Mammary epithelial cell (primary cell): ENCODE measurements at regions of chr10 and their contacts with region 1.

Region 1: GRCh38 chr10:84743483-84743882 is 415.1 kb downstream of the CCSER2 start:
- DNase-seq: no peak
- H3K4me3 ChIP-seq: no peak overlapping the region
- H3K27ac ChIP-seq: no peak overlapping the region
- H3K4me1 ChIP-seq: no peaks in the 10 kb centered on the region
- H3K27me3 ChIP-seq: no peaks in the 10 kb centered on the region
- CTCF ChIP-seq: peak; percentile 51 to 69

Region 2: GRCh38 chr10:83657487-83657886 is 1086.0 kb before region 1 on chr10:
- CTCF ChIA-PET with region 1: no interaction called
- dilution Hi-C with region 1: no loop called
- in situ Hi-C with region 1: no loop called
- intact Hi-C with region 1: no loop called
- DNase-seq: no peak
- H3K4me3 ChIP-seq: no peak overlapping the region
- H3K27ac ChIP-seq: no peak overlapping the region
- H3K4me1 ChIP-seq: no peaks in the 10 kb centered on the region
- H3K27me3 ChIP-seq: no peaks in the 10 kb centered on the region
- CTCF ChIP-seq: no peak

Region 3: DNA sequence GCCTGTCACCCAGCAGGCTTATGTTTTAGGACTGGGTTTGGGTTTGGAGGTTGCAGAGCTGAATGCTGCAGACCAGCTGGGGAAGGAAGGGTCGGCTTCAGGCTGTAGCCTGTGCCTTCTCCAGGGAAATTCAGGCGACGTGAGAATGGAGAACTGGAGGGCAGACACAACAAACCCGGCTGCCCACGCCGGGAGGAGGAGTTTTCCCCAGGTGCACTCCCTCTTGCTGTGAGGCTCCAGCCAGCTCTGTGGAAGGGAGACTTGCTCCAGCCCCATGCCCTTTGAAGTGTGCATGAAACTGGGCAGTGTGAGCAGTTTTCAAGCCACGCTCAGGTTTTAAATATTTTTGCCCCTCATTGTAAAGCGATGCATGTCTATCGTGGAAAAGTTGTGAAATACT is 136.0 kb before region 1 on chr10:
- CTCF ChIA-PET with region 1: no interaction called
- dilution Hi-C with region 1: no loop called
- in situ Hi-C with region 1: no loop called
- intact Hi-C with region 1: no loop called
- DNase-seq: no peak
- H3K4me3 ChIP-seq: no peak overlapping the region
- H3K27ac ChIP-seq: no peak overlapping the region
- H3K4me1 ChIP-seq: no peaks in the 10 kb centered on the region
- H3K27me3 ChIP-seq: no peaks in the 10 kb centered on the region
- CTCF ChIP-seq: no peak

Region 4: GRCh38 chr10:84665883-84666463 is 77.5 kb before region 1 on chr10:
- CTCF ChIA-PET with region 1: no interaction called
- dilution Hi-C with region 1: no loop called
- in situ Hi-C with region 1: no loop called
- intact Hi-C with region 1: loop called (anchors 5 kb)
- DNase-seq: peak; percentile 15
- H3K4me3 ChIP-seq: no peak overlapping the region
- H3K27ac ChIP-seq: no peak overlapping the region
- H3K4me1 ChIP-seq: no peaks in the 10 kb centered on the region
- H3K27me3 ChIP-seq: no peaks in the 10 kb centered on the region
- CTCF ChIP-seq: peak; percentile 87 to 92

Region 5: GRCh38 chr10:84783386-84783785 is 39.9 kb after region 1 on chr10:
- CTCF ChIA-PET with region 1: no interaction called
- dilution Hi-C with region 1: no loop called
- in situ Hi-C with region 1: no loop called
- intact Hi-C with region 1: no loop called
- DNase-seq: peak; percentile 24
- H3K4me3 ChIP-seq: no peak overlapping the region
- H3K27ac ChIP-seq: no peak overlapping the region
- H3K4me1 ChIP-seq: no peaks in the 10 kb centered on the region
- H3K27me3 ChIP-seq: no peaks in the 10 kb centered on the region
- CTCF ChIP-seq: peak; percentile 82 to 90

Region 6: DNA sequence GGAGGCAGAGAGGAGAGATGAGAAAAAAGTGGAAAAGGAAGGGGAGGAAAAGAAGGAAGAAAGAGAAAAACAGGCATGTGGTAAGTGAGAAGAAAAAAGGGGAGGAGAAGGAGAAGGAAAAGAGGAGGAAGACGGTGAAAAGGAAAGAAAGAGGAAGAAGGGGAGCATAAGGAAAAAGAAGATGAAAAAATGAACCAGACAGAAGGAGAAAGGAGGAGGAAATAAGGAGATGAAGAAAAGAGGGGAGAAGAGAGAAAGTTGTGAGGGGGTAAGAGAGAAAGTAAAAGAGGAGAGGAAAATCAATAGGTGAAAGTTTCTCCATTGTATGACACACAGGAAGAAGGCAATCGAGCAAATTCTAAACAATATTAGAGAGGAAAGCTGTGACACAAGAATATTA is 959.3 kb after region 1 on chr10:
- CTCF ChIA-PET with region 1: no interaction called
- dilution Hi-C with region 1: no loop called
- in situ Hi-C with region 1: no loop called
- intact Hi-C with region 1: no loop called
- DNase-seq: no peak
- H3K4me3 ChIP-seq: no peak overlapping the region
- H3K27ac ChIP-seq: no peak overlapping the region
- H3K4me1 ChIP-seq: no peaks in the 10 kb centered on the region
- H3K27me3 ChIP-seq: no peaks in the 10 kb centered on the region
- CTCF ChIP-seq: no peak